ENCODE measurements at regions of chr1 and their contacts with region 1.

Region 1: GRCh38 chr1:205354259-205354904 is 2.3 kb downstream of the KLHDC8A start:
- DNase-seq: peak; percentile 82
- ATAC-seq: peak; percentile 82
- H3K4me3 Mint-ChIP-seq: no peak overlapping the region
- H3K27ac Mint-ChIP-seq: no peak overlapping the region
- H3K4me1 Mint-ChIP-seq: no peaks in the 10 kb centered on the region
- H3K27me3 Mint-ChIP-seq: peaks cover 2% of the 10 kb centered on the region
- CTCF ChIP-seq: peak; percentile 88

Region 2: DNA sequence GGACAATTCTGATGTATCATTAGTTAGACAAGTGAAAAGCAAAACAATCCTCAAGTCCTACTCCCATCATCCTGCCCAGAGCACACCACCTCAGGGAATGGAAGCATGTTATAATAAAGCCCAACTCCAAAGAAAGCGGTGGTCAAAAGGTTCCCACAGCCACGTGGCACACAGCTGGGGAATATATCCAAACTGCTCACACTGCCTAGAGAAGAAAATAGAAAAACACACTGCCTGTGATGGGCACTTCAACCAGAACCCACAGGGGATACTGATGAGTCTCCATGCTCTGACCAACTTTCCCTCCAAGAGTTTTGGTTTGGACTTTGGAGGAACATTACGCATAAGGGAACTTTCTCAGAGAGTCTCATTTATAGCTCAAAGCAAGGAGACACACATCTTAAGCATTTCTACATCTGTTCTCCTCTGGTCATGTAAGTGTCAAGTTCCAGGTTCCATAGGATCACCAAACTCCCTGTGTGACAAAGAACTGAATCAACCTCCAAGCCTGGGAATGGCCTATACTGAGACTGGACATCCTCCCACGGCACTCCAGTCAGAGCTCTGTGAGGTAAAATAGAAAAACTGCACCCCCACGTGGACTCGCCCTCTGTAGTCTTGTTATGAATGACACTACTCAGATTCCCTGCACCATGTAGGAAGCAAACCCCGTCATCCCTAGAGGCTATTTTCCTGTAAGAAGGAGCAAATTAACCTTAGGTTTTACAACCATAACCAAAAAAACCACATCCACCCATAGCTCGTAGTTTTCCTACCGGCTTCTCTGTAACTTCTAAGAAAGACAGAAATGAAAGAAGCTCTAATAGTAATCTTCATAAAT is 155.1 kb before region 1 on chr1:
- CTCF ChIA-PET with region 1: no interaction called
- POLR2A ChIA-PET with region 1: no interaction called
- intact Hi-C with region 1: no loop called
- DNase-seq: peak; percentile 70
- ATAC-seq: peak; percentile 55
- H3K4me3 Mint-ChIP-seq: peak overlapping the region; percentile 53
- H3K27ac Mint-ChIP-seq: peak overlapping the region; percentile 94
- H3K4me1 Mint-ChIP-seq: peaks cover 69% of the 10 kb centered on the region
- H3K27me3 Mint-ChIP-seq: no peaks in the 10 kb centered on the region
- CTCF ChIP-seq: no peak

Region 3: GRCh38 chr1:205214756-205215155 is 139.6 kb before region 1 on chr1:
- CTCF ChIA-PET with region 1: no interaction called
- POLR2A ChIA-PET with region 1: no interaction called
- intact Hi-C with region 1: no loop called
- DNase-seq: no peak
- ATAC-seq: no peak
- H3K4me3 Mint-ChIP-seq: peak overlapping the region; percentile 7
- H3K27ac Mint-ChIP-seq: peak overlapping the region; percentile 55
- H3K4me1 Mint-ChIP-seq: peaks cover 24% of the 10 kb centered on the region
- H3K27me3 Mint-ChIP-seq: peaks cover 2% of the 10 kb centered on the region
- CTCF ChIP-seq: no peak

Region 4: GRCh38 chr1:205335643-205336091 is 18.7 kb before region 1 on chr1:
- CTCF ChIA-PET with region 1: interaction called, 62 read pairs
- POLR2A ChIA-PET with region 1: interaction called, 3 read pairs
- intact Hi-C with region 1: no loop called
- DNase-seq: peak; percentile 84
- ATAC-seq: peak; percentile 92
- H3K4me3 Mint-ChIP-seq: no peak overlapping the region
- H3K27ac Mint-ChIP-seq: no peak overlapping the region
- H3K4me1 Mint-ChIP-seq: peaks cover 6% of the 10 kb centered on the region
- H3K27me3 Mint-ChIP-seq: peaks cover 6% of the 10 kb centered on the region
- CTCF ChIP-seq: peak; percentile 98

Region 5: DNA sequence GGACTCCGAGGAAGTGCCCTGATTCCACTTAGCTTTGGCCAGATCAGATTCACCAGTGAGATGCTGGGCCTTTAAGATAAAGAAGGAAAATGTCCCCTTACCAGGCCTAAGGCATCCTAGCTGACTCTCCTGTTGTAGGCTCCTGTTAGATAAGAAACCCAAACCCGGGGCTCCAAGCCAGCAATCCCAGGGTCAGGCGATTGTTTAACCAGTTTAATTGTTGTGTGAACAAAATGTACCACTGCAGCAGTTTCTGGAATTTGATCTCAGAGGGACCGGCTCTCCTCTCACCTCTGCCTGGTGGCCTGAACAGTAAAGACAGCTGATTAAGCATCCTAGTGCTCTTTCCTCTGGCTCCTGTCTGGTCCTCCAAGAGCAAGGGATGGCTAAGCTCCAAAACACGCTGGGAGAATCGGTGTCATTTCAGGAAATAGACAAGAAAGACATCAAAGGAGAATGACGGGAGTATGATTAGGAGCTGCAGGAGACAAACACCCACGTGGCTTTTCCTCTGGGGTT is 11.6 kb after region 1 on chr1:
- CTCF ChIA-PET with region 1: interaction called, 30 read pairs
- POLR2A ChIA-PET with region 1: no interaction called
- intact Hi-C with region 1: no loop called
- DNase-seq: no peak
- ATAC-seq: no peak
- H3K4me3 Mint-ChIP-seq: no peak overlapping the region
- H3K27ac Mint-ChIP-seq: no peak overlapping the region
- H3K4me1 Mint-ChIP-seq: no peaks in the 10 kb centered on the region
- H3K27me3 Mint-ChIP-seq: no peaks in the 10 kb centered on the region
- CTCF ChIP-seq: no peak

Region 6: GRCh38 chr1:205382561-205382960 is 28.2 kb after region 1 on chr1:
- CTCF ChIA-PET with region 1: interaction called, 13 read pairs
- POLR2A ChIA-PET with region 1: no interaction called
- intact Hi-C with region 1: no loop called
- DNase-seq: no peak
- ATAC-seq: no peak
- H3K4me3 Mint-ChIP-seq: no peak overlapping the region
- H3K27ac Mint-ChIP-seq: no peak overlapping the region
- H3K4me1 Mint-ChIP-seq: no peaks in the 10 kb centered on the region
- H3K27me3 Mint-ChIP-seq: peaks cover 11% of the 10 kb centered on the region
- CTCF ChIP-seq: no peak

Region 7: GRCh38 chr1:205430696-205431305 is 76.4 kb after region 1 on chr1:
- CTCF ChIA-PET with region 1: interaction called, 10 read pairs
- POLR2A ChIA-PET with region 1: interaction called, 3 read pairs
- intact Hi-C with region 1: no loop called
- DNase-seq: peak; percentile 70
- ATAC-seq: peak; percentile 87
- H3K4me3 Mint-ChIP-seq: peak overlapping the region; percentile 74
- H3K27ac Mint-ChIP-seq: no peak overlapping the region
- H3K4me1 Mint-ChIP-seq: peaks cover 7% of the 10 kb centered on the region
- H3K27me3 Mint-ChIP-seq: no peaks in the 10 kb centered on the region
- CTCF ChIP-seq: peak; percentile 82